Activated CD4-positive, alpha-beta T cell treated with anti-CD3 and anti-CD28 coated beads for 36 hours (primary cell): ENCODE measurements at regions of chr6 and their contacts with region 1.

Region 1: DNA sequence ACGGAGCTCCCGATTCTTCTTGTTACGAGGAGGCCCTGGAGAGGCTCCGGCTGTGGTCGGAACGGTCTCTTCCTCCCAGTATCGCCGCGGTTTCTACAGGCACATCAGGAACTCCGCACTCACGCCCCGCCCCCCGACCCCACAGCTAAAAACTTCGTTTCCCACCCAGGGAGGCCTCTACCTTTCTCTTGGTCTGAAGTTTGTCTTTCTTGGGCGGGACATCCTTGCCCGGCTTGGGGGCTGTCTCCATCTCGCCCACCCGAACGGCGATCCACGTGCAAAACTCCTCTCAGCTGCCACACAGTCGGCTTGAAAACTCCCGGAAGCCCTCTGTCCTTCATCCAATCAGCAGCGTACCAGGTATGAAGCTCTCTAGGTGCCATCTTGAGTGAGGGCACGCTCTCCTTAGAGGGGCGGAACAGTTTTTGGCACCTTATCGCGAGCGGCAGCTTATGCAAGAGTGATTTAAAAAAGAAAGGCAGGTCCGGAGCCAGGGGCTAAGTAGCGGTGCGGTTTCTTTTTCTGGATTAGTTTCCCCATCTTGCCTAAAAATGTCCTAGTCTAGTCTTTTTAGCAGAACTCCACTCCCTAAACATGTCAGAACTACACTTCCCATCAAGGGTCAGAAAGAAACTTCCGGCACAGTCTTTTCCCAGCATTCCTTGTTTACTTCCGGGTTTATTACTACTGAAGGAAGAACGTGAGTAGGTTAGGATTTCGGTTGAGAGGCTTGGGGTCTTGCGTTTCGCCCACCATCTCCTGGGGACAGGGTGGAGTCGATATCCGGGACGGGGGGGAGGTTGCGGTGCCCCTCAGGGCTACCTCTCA is at the starts of genes PFDN6 and WDR46:
- DNase-seq: peak; percentile 87
- ATAC-seq: peak; percentile 98
- H3K4me3 Mint-ChIP-seq: peak within 1 kb of the TSS; percentile 98
- H3K27ac Mint-ChIP-seq: peak within 1 kb of the TSS; percentile 97
- H3K4me1 Mint-ChIP-seq: peaks cover 37% of the 10 kb centered on the region
- H3K27me3 Mint-ChIP-seq: no peaks in the 10 kb centered on the region
- total RNA-seq, gene PFDN6: 65.4 to 96.9 TPM
- total RNA-seq, gene WDR46: 63.5 to 69.4 TPM

Region 2: DNA sequence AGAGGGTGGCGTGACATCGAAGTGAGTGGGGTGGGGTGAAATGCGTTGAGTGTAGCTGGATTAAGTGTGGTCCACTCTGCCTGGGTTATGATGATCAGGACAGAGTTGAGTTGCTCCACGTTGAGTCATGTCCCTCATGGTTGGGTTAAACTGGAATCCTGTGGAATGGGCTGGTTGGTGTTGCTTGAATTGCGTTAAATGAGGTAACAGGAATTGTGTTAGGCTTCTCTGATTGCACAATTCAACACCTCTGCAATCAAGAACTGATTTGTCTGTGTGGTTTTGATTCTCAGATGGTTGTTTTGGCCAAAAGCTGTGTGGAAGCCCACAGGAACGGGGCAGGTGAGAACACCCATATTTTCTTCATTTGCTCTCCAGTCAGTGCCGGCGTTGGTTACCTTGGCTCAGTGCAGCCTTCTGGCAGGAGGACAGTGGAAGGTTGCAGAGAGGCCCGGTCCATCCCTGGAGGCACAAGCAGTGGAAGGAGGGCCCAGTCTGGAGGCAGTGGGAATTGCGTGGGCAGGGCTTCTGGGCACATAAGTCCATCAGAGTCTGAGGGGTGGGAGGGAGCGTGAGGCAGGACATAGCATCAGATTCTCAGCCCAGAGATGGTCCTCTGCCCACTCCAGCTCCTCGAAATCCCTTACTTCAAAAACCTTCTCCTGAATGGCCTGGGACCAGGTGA is 1076.9 kb before region 1 on chr6:
- CTCF ChIA-PET with region 1: no interaction called
- POLR2A ChIA-PET with region 1: no interaction called
- intact Hi-C with region 1: no loop called
- DNase-seq: no peak
- ATAC-seq: no peak
- H3K4me3 Mint-ChIP-seq: no peak overlapping the region
- H3K27ac Mint-ChIP-seq: no peak overlapping the region
- H3K4me1 Mint-ChIP-seq: no peaks in the 10 kb centered on the region
- H3K27me3 Mint-ChIP-seq: no peaks in the 10 kb centered on the region

Region 3: GRCh38 chr6:33208091-33208967 is 80.8 kb before region 1 on chr6 and contains the start of gene RING1:
- CTCF ChIA-PET with region 1: interaction called, 3 read pairs
- POLR2A ChIA-PET with region 1: interaction called, 3 read pairs
- intact Hi-C with region 1: loop called in 1 of 2 experiments (anchors 1 kb)
- DNase-seq: peak; percentile 92
- ATAC-seq: peak; percentile 20
- H3K4me3 Mint-ChIP-seq: peak within 1 kb of the TSS; percentile 80
- H3K27ac Mint-ChIP-seq: peak within 1 kb of the TSS; percentile 89
- H3K4me1 Mint-ChIP-seq: peaks cover 55% of the 10 kb centered on the region
- H3K27me3 Mint-ChIP-seq: peaks cover 8% of the 10 kb centered on the region
- total RNA-seq, gene RING1: 28.3 to 39.3 TPM